ENCODE measurements at regions of chr12 and their contacts with region 1.

Region 1: DNA sequence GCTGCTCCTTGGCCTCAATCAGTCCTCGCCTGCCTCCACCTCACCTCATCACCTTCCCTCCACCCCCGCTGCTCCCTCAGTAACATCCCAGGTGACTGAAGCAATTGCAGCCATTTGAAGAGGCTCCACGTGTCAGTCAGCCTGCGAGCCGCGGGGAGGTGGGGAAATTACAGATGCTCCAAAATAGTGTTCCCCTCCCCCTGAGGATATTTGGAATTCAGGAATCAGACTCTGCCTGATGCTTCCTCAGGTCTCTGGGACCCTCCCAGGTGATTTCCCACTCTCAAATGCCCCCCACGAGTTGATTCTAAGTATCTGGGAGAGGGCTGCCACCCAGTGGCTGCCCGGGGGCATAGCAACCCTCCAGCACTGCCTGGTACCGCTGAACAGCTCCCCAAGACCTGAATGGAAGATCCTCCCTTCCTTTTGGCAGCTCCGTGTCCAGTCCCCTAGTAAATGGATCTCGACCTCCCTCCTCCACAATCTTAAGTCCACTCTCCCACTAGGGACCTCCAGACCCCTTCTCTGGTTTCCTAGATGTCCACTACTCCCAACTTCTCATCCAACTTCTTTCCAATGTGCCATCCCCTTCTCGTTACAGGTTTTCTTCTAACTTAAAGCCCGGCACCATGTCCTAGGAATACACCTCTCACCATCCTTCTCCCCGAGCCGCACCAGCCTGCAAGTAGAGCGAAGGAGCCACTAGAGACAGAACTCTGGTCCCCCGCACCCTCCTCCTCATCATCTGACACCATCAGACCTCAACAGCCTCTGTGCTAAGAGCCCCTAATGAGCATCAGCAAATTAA is 1.4 kb upstream of the ASIC1 start:
- DNase-seq: peak; percentile 46
- ATAC-seq: peak; percentile 46
- H3K4me3 ChIP-seq: no peak overlapping the region
- H3K27ac ChIP-seq: no peak overlapping the region
- H3K4me1 ChIP-seq: peaks cover 7% of the 10 kb centered on the region
- H3K27me3 ChIP-seq: peaks cover 40% of the 10 kb centered on the region
- CTCF ChIP-seq: peak; percentile 97
- POLR2A ChIP-seq: no peak
- RAD21 ChIP-seq: peak; percentile 88

Region 2: DNA sequence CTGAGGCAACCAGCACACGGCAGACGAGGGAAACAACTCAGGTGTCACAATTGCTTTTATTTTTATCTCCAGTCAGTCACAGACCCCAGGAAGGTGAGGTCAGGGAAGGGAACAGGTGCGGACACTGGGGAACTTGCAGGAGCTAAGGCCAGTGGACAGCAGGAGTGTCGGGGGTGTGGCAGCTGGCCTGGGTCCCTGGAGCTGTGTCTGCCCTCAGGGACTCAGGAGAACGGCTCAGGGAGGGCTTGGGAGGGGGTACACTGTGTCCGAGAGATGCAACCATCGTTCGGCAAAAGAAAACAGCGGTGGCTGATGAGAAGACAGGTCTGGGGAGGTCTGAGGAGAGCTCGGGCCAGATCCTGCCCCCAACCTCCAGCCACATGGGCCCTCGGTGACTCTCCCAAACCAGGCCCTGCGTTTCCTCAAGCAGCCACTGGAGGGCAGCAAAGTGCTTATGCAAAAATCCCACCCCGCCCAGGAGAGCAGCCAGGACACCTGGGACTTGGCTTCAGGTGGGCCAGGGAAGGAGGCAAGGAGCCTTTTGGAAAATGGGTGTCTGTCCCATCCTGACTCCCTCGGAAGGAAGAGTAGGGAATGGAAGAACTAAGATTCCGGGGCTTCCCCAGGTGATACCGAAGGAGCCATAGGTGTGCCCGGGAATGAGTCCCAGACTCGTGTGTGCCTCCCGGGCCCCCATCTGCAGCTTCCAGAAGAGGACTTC is 189.0 kb before region 1 on chr12:
- CTCF ChIA-PET with region 1: interaction called, 3 read pairs
- POLR2A ChIA-PET with region 1: no interaction called
- dilution Hi-C with region 1: no loop called
- in situ Hi-C with region 1: loop called (anchors 5 kb)
- intact Hi-C with region 1: loop called (anchors 1 kb)
- DNase-seq: peak; percentile 46
- ATAC-seq: peak; percentile 25; the same call in 1 of the 2 replicates
- H3K4me3 ChIP-seq: no peak overlapping the region
- H3K27ac ChIP-seq: no peak overlapping the region
- H3K4me1 ChIP-seq: peaks cover 23% of the 10 kb centered on the region
- H3K27me3 ChIP-seq: peaks cover 22% of the 10 kb centered on the region
- CTCF ChIP-seq: peak; percentile 83
- POLR2A ChIP-seq: no peak
- RAD21 ChIP-seq: peak; percentile 86

Region 3: DNA sequence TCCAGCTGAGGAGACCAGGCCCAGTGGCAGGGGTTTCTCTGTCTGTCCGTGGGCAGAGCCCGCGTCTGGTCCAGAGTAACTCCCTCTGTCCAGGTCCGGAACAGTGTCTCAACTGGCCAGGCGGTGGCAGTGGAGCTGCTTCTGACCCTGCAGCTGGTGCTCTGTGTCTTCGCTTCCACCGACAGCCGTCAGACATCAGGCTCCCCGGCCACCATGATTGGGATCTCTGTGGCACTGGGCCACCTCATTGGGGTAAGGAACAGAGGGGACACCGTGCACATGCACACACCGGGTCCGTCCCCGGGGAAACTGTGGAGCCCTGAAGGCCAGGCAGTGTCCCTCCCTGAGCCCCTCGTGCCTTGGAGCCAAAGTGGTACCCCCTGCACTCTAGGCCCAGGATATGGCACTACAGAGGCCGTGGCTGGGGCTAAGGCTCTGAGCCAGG is 81.8 kb before region 1 on chr12:
- CTCF ChIA-PET with region 1: interaction called, 5 read pairs
- POLR2A ChIA-PET with region 1: no interaction called
- dilution Hi-C with region 1: no loop called
- in situ Hi-C with region 1: loop called (anchors 5 kb)
- intact Hi-C with region 1: loop called (anchors 1 kb)
- DNase-seq: peak; percentile 64
- ATAC-seq: peak; percentile 98
- H3K4me3 ChIP-seq: no peak overlapping the region
- H3K27ac ChIP-seq: no peak overlapping the region
- H3K4me1 ChIP-seq: no peaks in the 10 kb centered on the region
- H3K27me3 ChIP-seq: peaks cover 33% of the 10 kb centered on the region
- CTCF ChIP-seq: peak; percentile 73
- POLR2A ChIP-seq: no peak
- RAD21 ChIP-seq: peak; percentile 75

Region 4: DNA sequence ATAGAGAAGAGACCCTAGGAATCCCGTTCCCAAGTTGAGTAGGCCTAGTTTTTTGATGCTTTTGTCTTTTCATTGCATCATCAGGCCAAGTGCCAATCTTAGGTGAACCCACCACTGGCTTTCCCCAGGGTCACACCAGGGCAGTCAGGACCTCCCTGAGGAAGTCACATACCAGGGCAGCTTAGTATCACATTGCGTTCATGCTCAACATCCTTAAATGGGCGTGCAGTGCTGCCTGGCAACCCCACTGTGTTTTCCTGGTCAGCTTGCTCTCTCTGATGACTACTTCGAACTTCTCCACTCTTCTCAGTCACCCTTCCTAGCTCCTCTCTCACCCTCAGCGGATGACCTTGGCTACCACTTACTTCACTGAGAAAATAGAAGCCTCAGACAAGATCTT is 10.4 kb after region 1 on chr12:
- CTCF ChIA-PET with region 1: interaction called, 15 read pairs
- POLR2A ChIA-PET with region 1: no interaction called
- dilution Hi-C with region 1: no loop called
- in situ Hi-C with region 1: no loop called
- intact Hi-C with region 1: no loop called
- DNase-seq: peak; percentile 90
- ATAC-seq: peak; percentile 84
- H3K4me3 ChIP-seq: no peak overlapping the region
- H3K27ac ChIP-seq: peak overlapping the region; percentile 61
- H3K4me1 ChIP-seq: peaks cover 10% of the 10 kb centered on the region
- H3K27me3 ChIP-seq: no peaks in the 10 kb centered on the region
- CTCF ChIP-seq: no peak
- POLR2A ChIP-seq: no peak
- RAD21 ChIP-seq: no peak

Measured in IMR-90 (cell line).